ENCODE measurements at regions of chr12 and their contacts with region 1.

Region 1: DNA sequence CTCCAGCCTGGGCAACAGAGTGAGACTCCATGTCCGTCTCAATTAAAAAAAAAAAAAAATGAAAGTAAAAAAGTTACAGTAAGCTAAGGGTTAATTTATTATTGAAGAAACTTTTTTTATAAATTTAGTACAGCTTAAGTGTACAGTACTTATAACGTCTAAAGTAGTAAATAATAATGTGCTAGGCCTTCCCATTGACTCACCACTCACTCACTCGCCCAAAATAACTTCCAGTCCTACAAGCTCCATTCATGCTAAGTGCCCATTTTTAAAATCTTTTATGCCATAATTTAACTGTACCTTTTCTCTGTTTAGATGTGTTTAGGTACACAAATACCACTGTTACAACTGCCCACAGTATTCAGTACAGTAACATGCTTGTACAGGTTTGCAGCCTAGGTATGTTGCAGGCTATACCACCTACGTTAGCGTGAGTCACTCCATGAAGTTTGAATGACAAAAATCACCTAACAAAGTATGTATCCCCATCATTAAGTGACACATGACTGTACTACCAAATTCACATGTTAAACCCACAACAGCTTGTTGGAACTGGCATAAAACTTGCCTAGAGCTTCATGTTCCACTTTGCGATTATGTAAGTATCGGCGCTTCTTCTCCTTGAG is 10.7 kb downstream of the KANSL2 start:
- DNase-seq: no peak
- ATAC-seq: no peak
- H3K4me3 Mint-ChIP-seq: no peak overlapping the region
- H3K27ac Mint-ChIP-seq: no peak overlapping the region
- H3K4me1 Mint-ChIP-seq: peaks cover 10% of the 10 kb centered on the region
- H3K27me3 Mint-ChIP-seq: no peaks in the 10 kb centered on the region
- CTCF ChIP-seq: no peak

Region 2: GRCh38 chr12:48532601-48533000 is 138.7 kb before region 1 on chr12:
- CTCF ChIA-PET with region 1: no interaction called
- POLR2A ChIA-PET with region 1: no interaction called
- intact Hi-C with region 1: no loop called
- DNase-seq: no peak
- ATAC-seq: no peak
- H3K4me3 Mint-ChIP-seq: no peak overlapping the region
- H3K27ac Mint-ChIP-seq: no peak overlapping the region
- H3K4me1 Mint-ChIP-seq: peaks cover 20% of the 10 kb centered on the region
- H3K27me3 Mint-ChIP-seq: no peaks in the 10 kb centered on the region
- CTCF ChIP-seq: no peak

Region 3: GRCh38 chr12:48572326-48572725 is 99.0 kb before region 1 on chr12:
- CTCF ChIA-PET with region 1: no interaction called
- POLR2A ChIA-PET with region 1: no interaction called
- intact Hi-C with region 1: no loop called
- DNase-seq: no peak
- ATAC-seq: no peak
- H3K4me3 Mint-ChIP-seq: no peak overlapping the region
- H3K27ac Mint-ChIP-seq: no peak overlapping the region
- H3K4me1 Mint-ChIP-seq: no peaks in the 10 kb centered on the region
- H3K27me3 Mint-ChIP-seq: peaks cover 9% of the 10 kb centered on the region
- CTCF ChIP-seq: no peak

Region 4: GRCh38 chr12:48651681-48652080 is 19.7 kb before region 1 on chr12:
- CTCF ChIA-PET with region 1: interaction called, 3 read pairs
- POLR2A ChIA-PET with region 1: interaction called, 10 read pairs
- intact Hi-C with region 1: no loop called
- DNase-seq: no peak
- ATAC-seq: no peak
- H3K4me3 Mint-ChIP-seq: no peak overlapping the region
- H3K27ac Mint-ChIP-seq: no peak overlapping the region
- H3K4me1 Mint-ChIP-seq: peaks cover 2% of the 10 kb centered on the region
- H3K27me3 Mint-ChIP-seq: no peaks in the 10 kb centered on the region
- CTCF ChIP-seq: no peak

Region 5: GRCh38 chr12:48659863-48660262 is 11.5 kb before region 1 on chr12:
- CTCF ChIA-PET with region 1: interaction called, 3 read pairs
- POLR2A ChIA-PET with region 1: interaction called, 14 read pairs
- intact Hi-C with region 1: no loop called
- DNase-seq: no peak
- ATAC-seq: no peak
- H3K4me3 Mint-ChIP-seq: no peak overlapping the region
- H3K27ac Mint-ChIP-seq: no peak overlapping the region
- H3K4me1 Mint-ChIP-seq: peaks cover 4% of the 10 kb centered on the region
- H3K27me3 Mint-ChIP-seq: no peaks in the 10 kb centered on the region
- CTCF ChIP-seq: no peak

Measured in activated CD8-positive, alpha-beta T cell treated with anti-CD3 and anti-CD28 coated beads for 36 hours (primary cell).